ENCODE measurements at regions of chr2 and their contacts with region 1.

Region 1: DNA sequence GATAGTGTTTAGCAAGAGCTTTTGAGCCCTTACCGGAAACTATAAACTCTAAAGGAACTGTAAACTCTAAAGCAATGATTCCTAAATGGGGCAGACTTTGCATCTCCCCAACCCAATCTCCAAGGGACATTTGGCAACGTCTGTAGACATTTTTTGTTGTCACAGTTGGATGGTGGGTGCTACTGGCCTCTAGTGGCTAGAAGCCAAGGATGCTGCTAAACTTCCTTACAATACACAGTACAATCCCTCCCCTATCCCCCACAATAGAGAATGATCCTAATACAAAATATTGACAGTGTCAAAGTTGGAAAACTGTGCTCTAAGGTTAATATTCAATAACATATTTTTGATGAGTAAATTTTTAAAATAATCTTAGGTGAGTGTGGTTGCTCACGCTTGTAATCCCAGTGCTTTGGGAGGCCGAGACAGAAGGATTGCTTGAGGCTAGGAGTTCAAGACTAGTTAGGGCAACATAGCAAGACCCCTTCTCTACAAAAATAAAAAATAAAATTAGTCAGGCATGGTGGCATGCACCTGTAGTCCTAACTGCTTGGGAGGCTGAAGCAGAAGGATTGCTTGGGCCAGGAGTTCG is 66.7 kb downstream of the PTPN4 start:
- DNase-seq: peak; percentile 48 to 65
- H3K4me3 ChIP-seq: no peak overlapping the region
- H3K4me3 Mint-ChIP-seq: no peak overlapping the region
- H3K27ac Mint-ChIP-seq: no peak overlapping the region
- H3K4me1 ChIP-seq: 0 out of 2 replicates have a peak, but pooled peaks cover 4% of the 10 kb centered on the region
- H3K4me1 Mint-ChIP-seq: peaks cover 7% of the 10 kb centered on the region
- H3K27me3 ChIP-seq: no peaks in the 10 kb centered on the region
- H3K27me3 Mint-ChIP-seq: no peaks in the 10 kb centered on the region
- CTCF ChIP-seq: peak; percentile 71 to 90

Region 2: GRCh38 chr2:119702918-119703401 is 123.5 kb before region 1 on chr2:
- CTCF ChIA-PET with region 1: interaction called, 10 read pairs
- POLR2A ChIA-PET with region 1: no interaction called
- intact Hi-C with region 1: loop called (anchors 1 kb)
- DNase-seq: peak; percentile 74 to 85
- H3K4me3 ChIP-seq: no peak overlapping the region
- H3K4me3 Mint-ChIP-seq: no peak overlapping the region
- H3K27ac Mint-ChIP-seq: no peak overlapping the region
- H3K4me1 ChIP-seq: no peaks in the 10 kb centered on the region
- H3K4me1 Mint-ChIP-seq: peaks cover 12% of the 10 kb centered on the region
- H3K27me3 ChIP-seq: no peaks in the 10 kb centered on the region
- H3K27me3 Mint-ChIP-seq: no peaks in the 10 kb centered on the region
- CTCF ChIP-seq: peak; percentile 97

Region 3: DNA sequence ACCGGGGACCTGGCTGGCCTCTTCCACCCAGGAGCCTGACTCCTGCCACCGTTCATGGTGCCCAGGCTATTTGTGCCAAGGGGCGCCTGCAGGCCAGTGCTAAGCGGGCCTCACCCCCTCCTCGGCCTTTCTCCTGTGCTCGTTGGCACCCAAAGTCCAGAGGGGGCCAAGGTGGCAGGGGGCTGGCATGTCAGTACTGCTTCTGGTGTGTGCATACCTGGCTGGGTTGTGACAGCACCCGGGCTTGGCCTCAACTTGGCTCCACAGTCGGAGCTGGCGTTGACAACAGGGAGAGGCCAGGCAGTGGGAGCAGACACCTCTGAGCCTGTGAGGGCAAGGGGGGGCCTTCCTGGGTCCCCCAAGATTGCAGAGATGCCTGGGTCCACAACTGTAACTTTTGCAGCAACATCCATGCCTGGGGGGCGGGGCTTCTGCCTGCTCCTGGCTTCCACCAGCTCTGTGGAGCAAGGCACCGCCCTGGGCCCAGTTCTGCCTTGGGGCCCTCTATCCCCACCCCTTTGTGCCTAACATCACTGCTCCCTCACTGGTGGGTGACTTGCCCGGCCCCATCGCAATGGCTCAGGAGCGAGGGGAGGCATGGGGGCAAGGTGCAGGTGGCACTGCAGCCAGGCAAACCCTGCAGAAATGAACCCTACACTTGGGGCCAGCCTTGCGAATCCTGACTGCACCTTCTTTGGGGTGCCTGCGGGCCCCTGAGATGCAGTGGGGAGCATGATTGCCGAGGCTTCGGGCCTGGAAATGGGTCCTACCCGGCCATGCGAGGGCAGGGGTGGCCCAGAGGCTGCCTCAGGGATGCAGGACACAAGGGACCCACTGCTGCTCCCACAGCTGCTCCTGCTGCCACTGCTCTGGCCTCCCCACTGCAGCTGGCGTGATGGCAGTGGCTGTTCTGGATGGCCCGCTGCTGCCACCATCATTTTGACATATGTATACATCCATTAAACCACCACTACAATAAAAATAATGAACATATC is 30.9 kb before region 1 on chr2:
- CTCF ChIA-PET with region 1: no interaction called
- POLR2A ChIA-PET with region 1: no interaction called
- intact Hi-C with region 1: no loop called
- DNase-seq: no peak
- H3K4me3 ChIP-seq: no peak overlapping the region
- H3K4me3 Mint-ChIP-seq: no peak overlapping the region
- H3K27ac Mint-ChIP-seq: no peak overlapping the region
- H3K4me1 ChIP-seq: no peaks in the 10 kb centered on the region
- H3K4me1 Mint-ChIP-seq: no peaks in the 10 kb centered on the region
- H3K27me3 ChIP-seq: no peaks in the 10 kb centered on the region
- H3K27me3 Mint-ChIP-seq: no peaks in the 10 kb centered on the region
- CTCF ChIP-seq: no peak